ENCODE measurements at regions of chr2 and their contacts with region 1.

Region 1: GRCh38 chr2:27221166-27221565 is 4.0 kb downstream of the CAD start:
- H3K4me3 ChIP-seq: no peak overlapping the region
- H3K27ac ChIP-seq: no peak overlapping the region
- H3K4me1 ChIP-seq: no peaks in the 10 kb centered on the region; the same call in 1 of the 2 replicates
- CTCF ChIP-seq: no peak

Region 2: GRCh38 chr2:26770986-26771602 is 450.1 kb before region 1 on chr2:
- CTCF ChIA-PET with region 1: no interaction called
- POLR2A ChIA-PET with region 1: no interaction called
- H3K4me3 ChIP-seq: no peak overlapping the region
- H3K27ac ChIP-seq: no peak overlapping the region
- H3K4me1 ChIP-seq: no peaks in the 10 kb centered on the region; the same call in 1 of the 2 replicates
- CTCF ChIP-seq: no peak

Region 3: GRCh38 chr2:27174316-27175040 is 46.7 kb before region 1 on chr2:
- CTCF ChIA-PET with region 1: no interaction called
- POLR2A ChIA-PET with region 1: no interaction called
- H3K4me3 ChIP-seq: no peak overlapping the region
- H3K27ac ChIP-seq: no peak overlapping the region
- H3K4me1 ChIP-seq: no peaks in the 10 kb centered on the region
- CTCF ChIP-seq: no peak

Region 4: GRCh38 chr2:27241761-27242613 is 20.8 kb after region 1 on chr2:
- CTCF ChIA-PET with region 1: interaction called, 4 read pairs
- POLR2A ChIA-PET with region 1: interaction called, 13 read pairs
- H3K4me3 ChIP-seq: no peak overlapping the region
- H3K27ac ChIP-seq: no peak overlapping the region
- H3K4me1 ChIP-seq: no peaks in the 10 kb centered on the region
- CTCF ChIP-seq: no peak

Region 5: GRCh38 chr2:27335311-27335710 is 114.1 kb after region 1 on chr2:
- CTCF ChIA-PET with region 1: no interaction called
- POLR2A ChIA-PET with region 1: no interaction called
- H3K4me3 ChIP-seq: no peak overlapping the region
- H3K27ac ChIP-seq: no peak overlapping the region
- H3K4me1 ChIP-seq: no peaks in the 10 kb centered on the region
- CTCF ChIP-seq: no peak

Region 6: DNA sequence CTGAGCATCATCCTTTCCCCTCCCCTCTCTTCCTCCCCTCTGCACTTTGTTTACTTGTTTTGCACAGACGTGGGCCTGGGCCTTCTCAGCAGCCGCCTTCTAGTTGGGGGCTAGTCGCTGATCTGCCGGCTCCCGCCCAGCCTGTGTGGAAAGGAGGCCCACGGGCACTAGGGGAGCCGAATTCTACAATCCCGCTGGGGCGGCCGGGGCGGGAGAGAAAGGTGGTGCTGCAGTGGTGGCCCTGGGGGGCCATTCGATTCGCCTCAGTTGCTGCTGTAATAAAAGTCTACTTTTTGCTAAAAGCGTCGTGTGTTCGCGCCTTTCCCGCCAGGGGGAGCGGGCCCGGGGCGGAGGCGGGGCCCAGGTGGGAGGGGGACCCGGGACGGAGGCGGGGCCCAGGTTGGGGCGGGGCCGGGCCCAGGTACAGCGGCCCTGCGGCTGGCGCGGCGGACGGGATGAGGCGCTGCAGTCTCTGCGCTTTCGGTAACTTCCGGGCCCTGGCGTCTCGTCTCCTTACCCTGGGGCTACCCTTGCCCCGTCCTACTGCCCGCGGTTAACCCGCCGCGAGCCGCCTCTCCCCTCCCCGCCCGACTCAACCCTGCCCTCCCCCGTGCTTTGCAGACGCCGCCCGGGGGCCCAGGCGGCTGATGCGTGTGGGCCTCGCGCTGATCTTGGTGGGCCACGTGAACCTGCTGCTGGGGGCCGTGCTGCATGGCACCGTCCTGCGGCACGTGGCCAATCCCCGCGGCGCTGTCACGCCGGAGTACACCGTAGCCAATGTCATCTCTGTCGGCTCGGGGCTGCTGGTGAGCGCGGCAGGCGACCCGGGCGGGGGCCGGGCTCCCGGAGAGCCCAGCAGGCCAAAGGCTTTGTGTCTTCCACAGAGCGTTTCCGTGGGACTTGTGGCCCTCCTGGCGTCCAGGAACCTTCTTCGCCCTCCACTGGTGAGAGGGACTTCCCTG is 221.1 kb after region 1 on chr2 and contains the start of gene KRTCAP3:
- CTCF ChIA-PET with region 1: no interaction called
- POLR2A ChIA-PET with region 1: no interaction called
- H3K4me3 ChIP-seq: no peak within 1 kb of the TSS
- H3K27ac ChIP-seq: 0 out of 2 replicates have a peak within 1 kb of the TSS, but pooled peaks have one; percentile 9
- H3K4me1 ChIP-seq: no peaks in the 10 kb centered on the region
- CTCF ChIP-seq: no peak